Mammary epithelial cell (primary cell): ENCODE measurements at regions of chr19 and their contacts with region 1.

Region 1: DNA sequence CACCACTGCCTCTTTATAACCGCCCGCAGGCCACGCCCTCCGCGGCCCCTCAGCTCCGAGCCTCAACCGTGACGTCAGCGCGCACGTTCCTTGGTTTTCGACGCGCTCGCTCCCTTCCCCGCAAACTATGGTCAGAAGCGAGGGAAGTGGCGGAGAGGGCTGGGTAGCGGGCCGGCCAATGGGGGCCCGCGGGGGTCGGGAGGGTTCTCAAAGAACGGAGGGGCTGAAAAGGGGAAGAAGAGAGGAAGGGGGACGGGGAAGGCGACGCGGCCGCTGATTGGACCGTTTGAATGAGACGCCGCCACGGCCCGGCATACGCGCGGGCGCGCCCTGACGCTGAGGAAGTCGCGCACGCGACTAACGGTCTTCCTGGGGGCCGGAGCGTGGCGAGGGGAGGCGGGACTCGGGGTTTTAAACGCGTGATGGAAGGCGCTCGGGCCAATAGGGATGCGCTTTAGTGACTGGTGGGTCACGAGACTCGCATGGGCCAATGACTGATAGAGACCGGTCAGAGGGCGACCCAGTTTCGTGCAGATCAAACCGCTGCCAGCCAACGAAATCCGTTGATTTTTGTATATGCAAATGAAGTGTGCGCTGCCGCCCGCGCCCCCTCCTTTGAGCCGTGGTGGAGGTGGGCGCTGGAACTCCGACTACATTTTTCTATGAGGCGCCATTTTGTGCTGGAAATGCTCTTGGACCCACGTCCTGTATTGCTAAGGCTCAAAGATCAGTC is 378 bp upstream of the UBE2S start:
- DNase-seq: peak; percentile 98
- H3K4me3 ChIP-seq: peak overlapping the region; percentile 75 to 94 (median 81)
- H3K27ac ChIP-seq: peak overlapping the region; percentile 94
- H3K4me1 ChIP-seq: peaks cover 29% of the 10 kb centered on the region
- H3K27me3 ChIP-seq: no peaks in the 10 kb centered on the region
- CTCF ChIP-seq: no peak

Region 2: GRCh38 chr19:55447421-55448174 is 39.6 kb after region 1 on chr19:
- CTCF ChIA-PET with region 1: no interaction called
- dilution Hi-C with region 1: no loop called
- in situ Hi-C with region 1: no loop called
- intact Hi-C with region 1: loop called (anchors 1 kb)
- DNase-seq: peak; percentile 77
- H3K4me3 ChIP-seq: no peak overlapping the region
- H3K27ac ChIP-seq: no peak overlapping the region
- H3K4me1 ChIP-seq: peaks cover 33% of the 10 kb centered on the region
- H3K27me3 ChIP-seq: peaks cover 25% of the 10 kb centered on the region
- CTCF ChIP-seq: no peak

Region 3: GRCh38 chr19:55494172-55494761 is 86.3 kb after region 1 on chr19:
- CTCF ChIA-PET with region 1: no interaction called
- dilution Hi-C with region 1: no loop called
- in situ Hi-C with region 1: no loop called
- intact Hi-C with region 1: no loop called
- DNase-seq: no peak
- H3K4me3 ChIP-seq: no peak overlapping the region
- H3K27ac ChIP-seq: no peak overlapping the region
- H3K4me1 ChIP-seq: no peaks in the 10 kb centered on the region
- H3K27me3 ChIP-seq: peaks cover 4% of the 10 kb centered on the region
- CTCF ChIP-seq: no peak

Region 4: GRCh38 chr19:55516878-55517620 is 109.1 kb after region 1 on chr19:
- CTCF ChIA-PET with region 1: no interaction called
- dilution Hi-C with region 1: loop called (anchors 5 kb)
- in situ Hi-C with region 1: no loop called
- intact Hi-C with region 1: no loop called
- DNase-seq: peak; percentile 82
- H3K4me3 ChIP-seq: peak overlapping the region; percentile 25 to 58 (median 27)
- H3K27ac ChIP-seq: no peak overlapping the region
- H3K4me1 ChIP-seq: no peaks in the 10 kb centered on the region
- H3K27me3 ChIP-seq: no peaks in the 10 kb centered on the region
- CTCF ChIP-seq: peak; percentile 63 to 97

Region 5: GRCh38 chr19:55624109-55625003 is 216.4 kb after region 1 on chr19 and contains the start of gene ZNF784:
- CTCF ChIA-PET with region 1: no interaction called
- dilution Hi-C with region 1: loop called (anchors 5 kb)
- in situ Hi-C with region 1: no loop called
- intact Hi-C with region 1: no loop called
- DNase-seq: peak; percentile 85
- H3K4me3 ChIP-seq: peak within 1 kb of the TSS; percentile 43 to 76 (median 54)
- H3K27ac ChIP-seq: peak within 1 kb of the TSS; percentile 39
- H3K4me1 ChIP-seq: peaks cover 4% of the 10 kb centered on the region
- H3K27me3 ChIP-seq: no peaks in the 10 kb centered on the region
- CTCF ChIP-seq: no peak
- total RNA-seq, gene ZNF784: 4.2 to 6.1 TPM